MCF 10A (cell line): ENCODE measurements at regions of chr18 and their contacts with region 1.

Region 1: GRCh38 chr18:54392543-54393023 is 34.9 kb downstream of the C18orf54 start:
- DNase-seq: peak; percentile 71
- H3K4me3 Mint-ChIP-seq: no peak overlapping the region
- H3K27ac Mint-ChIP-seq: no peak overlapping the region
- H3K4me1 Mint-ChIP-seq: peaks cover 13% of the 10 kb centered on the region
- H3K27me3 Mint-ChIP-seq: no peaks in the 10 kb centered on the region
- CTCF ChIP-seq: peak; percentile 63

Region 2: DNA sequence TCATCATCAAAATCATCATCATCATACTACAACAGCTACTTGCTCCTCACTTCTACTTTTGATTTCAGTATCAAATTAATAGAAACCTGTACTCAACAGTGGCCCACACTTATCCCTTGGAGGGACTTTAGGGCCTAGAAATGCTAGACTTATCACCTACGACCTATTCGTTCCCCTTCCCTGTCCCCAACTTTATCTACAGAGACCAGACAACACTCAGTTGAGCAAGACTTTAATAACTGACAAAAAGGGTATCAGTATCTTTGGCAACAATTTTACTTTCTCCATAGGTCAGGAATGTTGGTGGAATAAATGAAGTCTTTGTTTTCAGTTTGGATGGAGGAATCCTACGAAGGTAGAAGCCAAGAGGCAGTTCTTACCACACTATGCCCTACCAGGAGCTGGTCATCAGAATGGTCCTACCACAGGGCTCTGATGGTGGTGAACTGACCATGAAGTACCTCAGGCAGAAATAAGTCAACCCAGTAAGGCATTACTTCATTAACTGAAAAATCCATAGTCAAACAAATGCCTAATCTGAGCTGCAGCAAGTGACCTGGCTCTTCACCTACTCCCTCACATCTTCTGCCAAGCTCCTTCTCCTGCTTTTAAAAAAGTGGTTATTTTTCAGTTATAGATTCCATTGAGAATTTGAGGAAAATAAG is 194.7 kb before region 1 on chr18:
- CTCF ChIA-PET with region 1: no interaction called
- POLR2A ChIA-PET with region 1: no interaction called
- intact Hi-C with region 1: no loop called
- DNase-seq: no peak
- H3K4me3 Mint-ChIP-seq: no peak overlapping the region
- H3K27ac Mint-ChIP-seq: no peak overlapping the region
- H3K4me1 Mint-ChIP-seq: peaks cover 16% of the 10 kb centered on the region
- H3K27me3 Mint-ChIP-seq: no peaks in the 10 kb centered on the region
- CTCF ChIP-seq: no peak

Region 3: DNA sequence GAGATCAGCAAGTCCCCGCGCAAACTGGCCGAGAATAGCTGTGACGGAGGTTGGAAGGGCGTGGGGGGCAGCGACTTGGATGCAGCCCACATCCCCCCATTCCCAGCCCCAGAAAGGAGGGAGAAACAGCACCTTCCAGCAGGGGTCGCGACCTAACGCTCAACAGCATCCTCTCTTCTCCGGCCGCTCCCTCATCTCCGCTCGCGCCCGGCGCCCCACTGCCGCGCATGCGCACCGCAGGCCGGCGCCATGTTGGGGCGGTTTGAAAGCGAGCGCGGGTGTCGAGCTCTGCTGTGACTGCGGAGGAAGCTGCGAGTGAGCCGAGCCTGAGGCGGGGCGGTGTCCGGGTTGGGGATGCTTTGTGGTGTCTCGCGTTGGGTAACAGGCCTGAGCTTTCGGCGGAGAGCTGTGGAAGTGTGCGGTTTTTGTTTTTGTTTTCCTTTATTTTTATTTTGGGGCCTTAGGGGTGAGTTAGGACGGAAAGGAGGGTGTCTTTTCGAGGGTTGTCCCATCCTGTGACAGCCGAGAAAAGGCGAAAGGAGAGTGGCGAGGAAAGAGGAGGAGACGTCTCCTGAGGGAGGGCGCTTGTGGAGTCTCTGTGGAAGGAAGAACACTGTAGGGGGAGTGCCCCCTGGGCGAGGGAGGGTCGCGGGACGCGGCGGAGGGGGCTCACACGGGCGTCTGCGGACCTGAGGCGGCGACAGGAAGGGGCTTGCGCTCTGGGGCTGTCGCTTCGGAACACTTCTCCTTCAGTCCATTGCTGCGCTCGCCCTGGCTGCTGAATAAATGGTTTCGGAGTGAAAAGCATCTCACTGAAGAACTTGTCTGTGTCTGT is 34.7 kb before region 1 on chr18 and contains the starts of genes C18orf54 and STARD6:
- CTCF ChIA-PET with region 1: interaction called, 9 read pairs
- POLR2A ChIA-PET with region 1: interaction called, 16 read pairs
- intact Hi-C with region 1: loop called (anchors 1 kb)
- DNase-seq: peak; percentile 91
- H3K4me3 Mint-ChIP-seq: peak within 1 kb of the TSS; percentile 100
- H3K27ac Mint-ChIP-seq: peak within 1 kb of the TSS; percentile 99
- H3K4me1 Mint-ChIP-seq: peaks cover 6% of the 10 kb centered on the region
- H3K27me3 Mint-ChIP-seq: no peaks in the 10 kb centered on the region
- CTCF ChIP-seq: peak; percentile 62
- total RNA-seq, gene C18orf54: 4.4 and 5.5 TPM in 2 replicates
- total RNA-seq, gene STARD6: not detected in 2 replicates

Region 4: GRCh38 chr18:54466248-54467005 is 73.8 kb after region 1 on chr18:
- CTCF ChIA-PET with region 1: no interaction called
- POLR2A ChIA-PET with region 1: no interaction called
- intact Hi-C with region 1: no loop called
- DNase-seq: no peak
- H3K4me3 Mint-ChIP-seq: no peak overlapping the region
- H3K27ac Mint-ChIP-seq: no peak overlapping the region
- H3K4me1 Mint-ChIP-seq: peaks cover 3% of the 10 kb centered on the region
- H3K27me3 Mint-ChIP-seq: no peaks in the 10 kb centered on the region
- CTCF ChIP-seq: no peak

Region 5: GRCh38 chr18:54647176-54647575 is 254.6 kb after region 1 on chr18:
- CTCF ChIA-PET with region 1: no interaction called
- POLR2A ChIA-PET with region 1: interaction called, 3 read pairs
- intact Hi-C with region 1: loop called (anchors 2 kb)
- DNase-seq: peak; percentile 66
- H3K4me3 Mint-ChIP-seq: no peak overlapping the region
- H3K27ac Mint-ChIP-seq: no peak overlapping the region
- H3K4me1 Mint-ChIP-seq: no peaks in the 10 kb centered on the region
- H3K27me3 Mint-ChIP-seq: no peaks in the 10 kb centered on the region
- CTCF ChIP-seq: peak; percentile 62